Activated naive CD4-positive, alpha-beta T cell treated with anti-CD3 and anti-CD28 coated beads for 36 hours (primary cell): ENCODE measurements at regions of chr17 and their contacts with region 1.

Region 1: DNA sequence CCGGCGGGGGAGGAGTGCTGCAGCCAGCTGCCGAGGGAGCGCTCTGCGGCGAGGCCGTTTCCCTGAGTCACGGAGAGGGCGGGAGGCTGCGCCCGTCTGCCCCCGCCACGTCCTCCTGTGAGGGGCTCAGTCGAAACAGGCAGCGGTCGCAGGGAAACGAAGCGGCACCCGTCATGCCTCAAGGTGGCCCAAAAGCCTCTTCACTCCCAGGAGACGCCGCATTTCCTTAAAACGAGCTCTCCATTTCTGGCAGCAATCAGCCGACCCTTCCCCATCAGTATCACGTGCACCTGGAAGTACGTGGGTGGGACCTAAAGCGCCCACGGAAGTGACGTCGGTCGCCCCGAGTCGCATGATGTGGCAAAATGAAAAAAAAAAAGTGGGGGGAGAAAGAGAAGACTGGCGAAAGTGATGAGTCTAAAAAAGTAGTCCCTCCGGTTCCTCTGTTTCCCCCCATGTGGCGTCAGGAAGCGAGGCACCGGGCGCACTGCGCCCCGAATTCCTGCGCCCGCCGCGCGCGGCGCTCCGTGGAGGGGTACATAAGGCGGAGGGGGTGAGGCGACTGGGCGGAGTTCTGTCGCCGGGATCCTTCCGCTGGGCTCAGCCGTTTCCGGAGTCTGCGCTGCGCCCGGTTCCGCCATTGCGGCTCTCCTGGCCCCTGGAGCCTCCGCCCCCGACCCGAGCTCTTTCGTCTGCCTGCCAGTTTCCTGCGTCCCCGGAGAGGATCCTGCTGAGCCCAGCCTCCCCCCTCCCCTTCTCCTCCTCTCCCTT is at the start of gene CLTC:
- DNase-seq: peak; percentile 94
- H3K4me3 Mint-ChIP-seq: peak within 1 kb of the TSS; percentile 93
- H3K27ac Mint-ChIP-seq: peak within 1 kb of the TSS; percentile 96
- H3K4me1 Mint-ChIP-seq: peaks cover 49% of the 10 kb centered on the region
- H3K27me3 Mint-ChIP-seq: no peaks in the 10 kb centered on the region
- total RNA-seq, gene CLTC: 127 to 134 TPM

Region 2: DNA sequence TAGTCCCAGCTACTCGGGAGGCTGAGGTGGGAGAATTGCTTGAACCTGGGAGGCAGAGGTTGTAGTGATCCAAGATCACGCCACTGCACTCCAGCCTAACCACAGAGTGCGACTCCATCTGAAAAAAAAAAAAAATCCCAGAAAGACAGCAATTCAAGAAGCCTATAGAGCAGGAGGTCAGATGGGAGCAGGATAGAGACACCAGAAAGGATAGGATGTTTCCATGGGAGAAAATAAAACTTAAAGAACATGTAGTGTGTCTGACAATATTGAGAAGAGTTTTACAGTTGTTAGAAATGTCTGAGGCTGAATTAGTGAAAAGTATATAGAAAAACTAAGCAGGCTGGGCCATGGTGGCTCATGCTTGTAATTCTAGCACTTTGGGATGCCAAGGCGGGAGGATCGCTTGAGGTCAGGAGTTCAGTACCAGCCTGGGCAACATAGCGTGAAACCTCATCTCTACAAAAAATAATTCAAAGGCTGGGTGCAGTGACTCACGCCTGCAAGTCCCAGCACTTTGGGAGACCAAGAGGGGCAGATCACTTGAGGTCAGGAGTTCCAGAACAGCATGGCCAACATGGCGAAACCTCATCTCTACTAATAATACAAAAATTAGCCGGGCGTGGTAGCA is 497.5 kb before region 1 on chr17:
- CTCF ChIA-PET with region 1: no interaction called
- intact Hi-C with region 1: no loop called
- DNase-seq: no peak
- H3K4me3 Mint-ChIP-seq: no peak overlapping the region
- H3K27ac Mint-ChIP-seq: no peak overlapping the region
- H3K4me1 Mint-ChIP-seq: peaks cover 2% of the 10 kb centered on the region
- H3K27me3 Mint-ChIP-seq: no peaks in the 10 kb centered on the region

Region 3: GRCh38 chr17:59391006-59391405 is 228.5 kb before region 1 on chr17:
- CTCF ChIA-PET with region 1: no interaction called
- intact Hi-C with region 1: no loop called
- DNase-seq: no peak
- H3K4me3 Mint-ChIP-seq: no peak overlapping the region
- H3K27ac Mint-ChIP-seq: no peak overlapping the region
- H3K4me1 Mint-ChIP-seq: no peaks in the 10 kb centered on the region
- H3K27me3 Mint-ChIP-seq: no peaks in the 10 kb centered on the region

Region 4: DNA sequence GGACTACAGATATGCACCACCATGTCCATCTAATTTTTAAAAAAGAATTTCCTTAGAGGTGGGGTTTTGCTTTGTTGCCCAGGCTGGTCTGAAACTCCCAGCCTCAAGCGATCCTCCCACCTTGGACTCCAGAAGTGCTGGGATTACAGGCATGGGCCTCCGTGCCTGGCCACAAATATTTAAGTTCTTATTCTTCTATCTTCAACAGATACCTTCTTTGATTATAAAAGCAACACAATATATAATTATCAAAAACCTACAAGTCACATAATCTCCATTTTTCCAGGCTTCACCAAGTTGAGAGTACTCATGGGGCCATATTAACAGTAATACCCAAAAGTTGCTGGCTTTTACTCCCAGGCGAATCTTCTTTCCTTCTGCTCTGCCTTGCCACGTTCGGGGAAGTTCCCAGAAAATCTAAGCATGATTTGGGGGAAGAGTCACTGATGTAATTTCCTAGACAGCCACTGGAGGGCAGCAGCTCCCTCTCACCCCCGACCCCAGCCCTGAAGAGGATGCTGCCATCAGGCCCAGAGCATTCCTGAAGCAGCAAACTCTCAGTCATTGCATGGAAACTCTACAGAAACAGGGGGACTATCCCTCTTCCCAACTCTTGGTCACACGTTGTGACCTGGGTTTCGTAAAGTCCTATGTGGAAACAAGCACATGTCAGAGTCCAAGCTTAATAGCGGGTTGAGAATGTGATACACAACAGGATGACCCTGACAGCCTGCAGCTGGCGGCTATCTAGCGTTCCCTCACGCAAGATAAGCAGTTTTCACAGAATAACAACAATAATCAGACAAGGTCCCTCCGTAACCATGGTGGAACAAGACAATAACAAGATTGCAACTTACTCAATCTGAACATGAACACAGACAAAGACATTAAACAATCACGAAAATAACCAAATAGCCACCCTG is 98.0 kb before region 1 on chr17:
- CTCF ChIA-PET with region 1: interaction called, 3 read pairs
- intact Hi-C with region 1: loop called (anchors 5 kb)
- DNase-seq: peak; percentile 80
- H3K4me3 Mint-ChIP-seq: no peak overlapping the region
- H3K27ac Mint-ChIP-seq: no peak overlapping the region
- H3K4me1 Mint-ChIP-seq: peaks cover 4% of the 10 kb centered on the region
- H3K27me3 Mint-ChIP-seq: peaks cover under 1% of the 10 kb centered on the region

Region 5: DNA sequence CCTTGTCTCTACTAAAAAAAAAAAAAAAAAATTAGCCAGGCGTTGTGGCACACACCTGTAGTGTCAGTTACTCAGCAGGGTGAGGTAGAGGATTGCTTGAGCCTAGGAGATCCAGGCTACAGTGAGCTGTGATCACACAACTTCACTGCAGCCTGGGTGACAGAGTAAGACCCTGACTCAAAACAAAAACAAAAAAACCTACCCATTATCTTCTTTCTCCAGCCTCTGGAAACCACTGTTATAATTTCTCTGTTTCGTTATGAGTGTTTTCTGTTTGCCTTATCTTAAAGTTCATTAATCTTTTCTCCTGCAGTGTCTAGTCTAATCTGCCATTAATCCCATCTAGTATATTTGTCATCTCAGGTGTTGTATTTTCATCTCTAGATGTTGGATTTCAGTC is 18.3 kb before region 1 on chr17:
- CTCF ChIA-PET with region 1: no interaction called
- intact Hi-C with region 1: loop called (anchors 2 kb)
- DNase-seq: peak; percentile 26
- H3K4me3 Mint-ChIP-seq: no peak overlapping the region
- H3K27ac Mint-ChIP-seq: peak overlapping the region; percentile 28
- H3K4me1 Mint-ChIP-seq: peaks cover 6% of the 10 kb centered on the region
- H3K27me3 Mint-ChIP-seq: no peaks in the 10 kb centered on the region

Region 6: GRCh38 chr17:59707114-59707970 is 87.9 kb after region 1 on chr17 and contains the starts of genes PTRH2 and VMP1:
- CTCF ChIA-PET with region 1: no interaction called
- intact Hi-C with region 1: loop called (anchors 1 kb)
- DNase-seq: peak; percentile 97
- H3K4me3 Mint-ChIP-seq: peak within 1 kb of the TSS; percentile 94
- H3K27ac Mint-ChIP-seq: peak within 1 kb of the TSS; percentile 92
- H3K4me1 Mint-ChIP-seq: peaks cover 54% of the 10 kb centered on the region
- H3K27me3 Mint-ChIP-seq: no peaks in the 10 kb centered on the region
- total RNA-seq, gene PTRH2: 19.7 to 24.4 TPM
- total RNA-seq, gene VMP1: 423 to 438 TPM

Region 7: GRCh38 chr17:59762513-59763374 is 143.3 kb after region 1 on chr17:
- CTCF ChIA-PET with region 1: no interaction called
- intact Hi-C with region 1: no loop called
- DNase-seq: peak; percentile 51
- H3K4me3 Mint-ChIP-seq: peak overlapping the region; percentile 35
- H3K27ac Mint-ChIP-seq: peak overlapping the region; percentile 98
- H3K4me1 Mint-ChIP-seq: peaks cover 67% of the 10 kb centered on the region
- H3K27me3 Mint-ChIP-seq: no peaks in the 10 kb centered on the region

Region 8: GRCh38 chr17:59846394-59847165 is 227.1 kb after region 1 on chr17:
- CTCF ChIA-PET with region 1: no interaction called
- intact Hi-C with region 1: loop called (anchors 5 kb)
- DNase-seq: peak; percentile 53
- H3K4me3 Mint-ChIP-seq: peak overlapping the region; percentile 28
- H3K27ac Mint-ChIP-seq: peak overlapping the region; percentile 100
- H3K4me1 Mint-ChIP-seq: peaks cover 76% of the 10 kb centered on the region
- H3K27me3 Mint-ChIP-seq: no peaks in the 10 kb centered on the region

Region 9: GRCh38 chr17:59941131-59941530 is 321.7 kb after region 1 on chr17:
- CTCF ChIA-PET with region 1: no interaction called
- intact Hi-C with region 1: loop called (anchors 1 kb)
- DNase-seq: peak; percentile 38
- H3K4me3 Mint-ChIP-seq: peak overlapping the region; percentile 39
- H3K27ac Mint-ChIP-seq: peak overlapping the region; percentile 98
- H3K4me1 Mint-ChIP-seq: peaks cover 59% of the 10 kb centered on the region
- H3K27me3 Mint-ChIP-seq: no peaks in the 10 kb centered on the region